Naive thymus-derived CD4-positive, alpha-beta T cell (primary cell): ENCODE measurements at regions of chr6 and their contacts with region 1.

Region 1: DNA sequence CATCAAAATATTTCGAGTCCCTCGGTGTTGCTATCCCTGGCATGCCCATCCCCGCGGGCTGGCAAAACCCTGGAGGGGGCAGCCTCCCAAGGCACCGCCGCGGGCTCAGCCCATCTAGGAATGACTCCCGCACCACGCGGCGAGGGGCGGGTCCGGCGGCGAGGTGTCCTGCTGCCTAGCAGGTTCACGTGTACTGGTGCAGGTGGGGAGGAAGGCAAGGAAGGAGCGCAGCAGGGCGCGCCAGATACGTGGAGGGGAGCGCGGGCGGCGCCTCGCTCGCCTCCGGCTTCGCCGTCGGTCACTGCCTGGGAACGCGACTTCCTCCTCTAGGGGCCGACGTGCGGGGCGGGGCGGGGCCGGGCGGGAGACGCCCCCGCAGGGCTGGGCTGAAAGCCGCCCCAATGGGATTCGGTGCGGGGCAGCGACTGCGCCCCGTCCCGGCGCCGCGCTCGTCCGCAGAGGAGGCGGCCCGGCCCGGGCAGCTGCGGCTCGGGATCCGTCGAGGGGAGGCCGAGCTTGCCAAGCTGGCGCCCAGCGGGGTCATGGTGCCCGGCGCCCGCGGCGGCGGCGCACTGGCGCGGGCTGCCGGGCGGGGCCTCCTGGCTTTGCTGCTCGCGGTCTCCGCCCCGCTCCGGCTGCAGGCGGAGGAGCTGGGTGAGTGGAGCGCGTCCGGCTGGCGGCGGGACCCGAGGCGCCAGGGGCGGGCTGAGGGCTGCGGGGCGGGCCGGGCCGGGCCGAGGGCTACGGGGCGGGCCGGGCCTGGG is at the start of gene DCBLD1:
- DNase-seq: peak in 8 of 9 donors; percentile 32 to 72 (median 36)
- ATAC-seq: peak; percentile 85
- H3K4me3 ChIP-seq: peak within 1 kb of the TSS; percentile 63
- H3K4me3 Mint-ChIP-seq: peak within 1 kb of the TSS; percentile 87 to 96 (median 91)
- H3K27ac ChIP-seq: no peak within 1 kb of the TSS
- H3K27ac Mint-ChIP-seq: peak within 1 kb of the TSS in 7 of 9 donors; percentile 28 to 84 (median 65)
- H3K4me1 ChIP-seq: peaks cover 8 to 10% of the 10 kb centered on the region in 2 donors
- H3K4me1 Mint-ChIP-seq: peaks cover 15 to 18% (median 16%) of the 10 kb centered on the region in 7 donors
- H3K27me3 ChIP-seq: no peaks in the 10 kb centered on the region
- H3K27me3 Mint-ChIP-seq: peaks cover 45 to 66% (median 53%) of the 10 kb centered on the region in 5 donors
- total RNA-seq, gene DCBLD1: 1.5 to 7.6 (median 5.6) TPM

Region 2: DNA sequence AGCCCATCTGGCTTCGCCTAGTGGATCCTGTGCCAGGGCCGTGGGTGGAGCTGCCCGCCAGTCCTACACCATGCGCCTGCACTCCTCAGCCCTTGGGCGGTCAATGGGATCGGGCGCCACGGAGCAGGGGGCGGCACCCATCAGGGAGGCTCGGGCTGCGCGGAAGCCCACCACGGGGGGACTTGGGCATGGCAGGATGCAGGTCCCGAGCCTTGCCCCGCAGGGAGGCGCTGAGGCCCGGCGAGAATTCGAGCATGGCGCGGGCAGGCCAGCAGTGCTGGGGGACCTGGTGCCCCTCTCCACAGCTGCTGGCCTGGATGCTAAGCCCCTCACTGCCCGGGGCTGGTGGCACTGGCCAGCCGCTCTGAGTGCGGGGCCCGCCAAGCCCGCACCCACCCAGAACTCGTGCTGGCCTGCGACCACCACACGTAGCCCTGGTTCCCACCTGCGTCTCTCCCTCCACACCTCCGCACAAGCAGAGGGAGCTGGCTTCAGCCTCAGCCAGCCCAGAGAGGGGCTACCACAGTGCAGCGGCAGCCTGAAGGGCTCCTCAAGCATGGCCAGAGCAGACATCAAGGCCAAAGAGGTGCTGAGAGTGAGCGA is 109.1 kb before region 1 on chr6:
- CTCF ChIA-PET with region 1: no interaction called
- POLR2A ChIA-PET with region 1: no interaction called
- intact Hi-C with region 1: no loop called
- DNase-seq: no peak
- ATAC-seq: no peak
- H3K4me3 ChIP-seq: no peak overlapping the region
- H3K4me3 Mint-ChIP-seq: no peak overlapping the region
- H3K27ac ChIP-seq: no peak overlapping the region
- H3K27ac Mint-ChIP-seq: no peak overlapping the region
- H3K4me1 ChIP-seq: no peaks in the 10 kb centered on the region
- H3K4me1 Mint-ChIP-seq: peaks cover 0 to 10% (median 4%) of the 10 kb centered on the region in 7 donors
- H3K27me3 ChIP-seq: peaks cover 0 to 4% of the 10 kb centered on the region in 2 donors
- H3K27me3 Mint-ChIP-seq: peaks cover 0 to 44% (median 25%) of the 10 kb centered on the region in 5 donors

Region 3: DNA sequence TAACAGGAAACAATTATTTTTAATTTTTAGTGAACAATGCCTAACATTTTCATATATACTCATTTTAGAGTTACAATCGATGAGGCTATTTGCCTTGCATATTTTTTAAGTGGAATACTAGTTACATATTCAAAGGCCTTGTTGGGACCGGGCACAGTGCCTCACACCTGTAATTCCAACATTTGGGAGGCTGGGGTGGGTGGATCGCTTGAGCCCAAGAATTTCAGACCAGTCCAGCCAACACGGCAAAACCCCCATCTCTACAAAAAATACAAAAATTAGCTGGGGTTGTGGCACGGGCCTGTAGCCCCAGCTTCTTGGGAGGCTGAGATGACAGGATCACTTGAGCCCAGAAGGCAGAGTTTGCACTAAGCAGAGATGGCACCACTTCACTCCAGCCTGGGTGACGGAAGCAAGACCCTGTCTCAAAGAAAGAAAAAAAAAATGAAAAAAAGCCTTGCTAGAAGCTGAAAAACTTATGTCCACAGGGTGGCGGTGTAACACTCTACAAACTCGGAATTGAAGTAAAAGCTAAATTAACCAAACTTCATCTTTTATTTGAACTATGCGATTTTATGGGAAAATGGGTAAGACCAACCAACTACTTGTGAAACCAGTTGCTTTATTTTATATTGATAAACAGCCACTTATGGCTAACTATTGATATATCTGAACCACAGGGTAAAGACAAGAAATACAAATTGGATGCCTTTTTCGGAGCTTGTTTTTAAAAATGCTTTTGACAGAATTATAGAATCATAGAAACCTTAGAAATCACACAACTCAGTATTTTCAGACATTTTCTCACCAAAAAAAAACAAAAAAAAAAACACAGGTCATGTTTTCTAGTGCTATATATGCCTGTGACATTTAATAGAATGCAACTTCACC is 32.6 kb before region 1 on chr6:
- CTCF ChIA-PET with region 1: interaction called, 4 read pairs
- POLR2A ChIA-PET with region 1: interaction called, 3 read pairs
- intact Hi-C with region 1: loop called in 1 of 2 experiments (anchors 1 kb)
- DNase-seq: peak; percentile 25 to 72 (median 60)
- ATAC-seq: peak; percentile 72
- H3K4me3 ChIP-seq: no peak overlapping the region
- H3K4me3 Mint-ChIP-seq: no peak overlapping the region
- H3K27ac ChIP-seq: no peak overlapping the region
- H3K27ac Mint-ChIP-seq: no peak overlapping the region
- H3K4me1 ChIP-seq: no peaks in the 10 kb centered on the region
- H3K4me1 Mint-ChIP-seq: peaks cover 0 to 5% (median 0%) of the 10 kb centered on the region in 7 donors
- H3K27me3 ChIP-seq: peaks cover 0 to 3% of the 10 kb centered on the region in 2 donors
- H3K27me3 Mint-ChIP-seq: peaks cover 19 to 73% (median 42%) of the 10 kb centered on the region in 5 donors

Region 4: GRCh38 chr6:117536317-117536716 is 53.9 kb after region 1 on chr6:
- CTCF ChIA-PET with region 1: no interaction called
- POLR2A ChIA-PET with region 1: no interaction called
- intact Hi-C with region 1: no loop called
- DNase-seq: no peak
- ATAC-seq: no peak
- H3K4me3 ChIP-seq: no peak overlapping the region
- H3K4me3 Mint-ChIP-seq: no peak overlapping the region
- H3K27ac ChIP-seq: no peak overlapping the region
- H3K27ac Mint-ChIP-seq: no peak overlapping the region
- H3K4me1 ChIP-seq: no peaks in the 10 kb centered on the region
- H3K4me1 Mint-ChIP-seq: peaks cover 0 to 3% (median 0%) of the 10 kb centered on the region in 7 donors
- H3K27me3 ChIP-seq: no peaks in the 10 kb centered on the region
- H3K27me3 Mint-ChIP-seq: peaks cover 9 to 28% (median 13%) of the 10 kb centered on the region in 5 donors

Region 5: DNA sequence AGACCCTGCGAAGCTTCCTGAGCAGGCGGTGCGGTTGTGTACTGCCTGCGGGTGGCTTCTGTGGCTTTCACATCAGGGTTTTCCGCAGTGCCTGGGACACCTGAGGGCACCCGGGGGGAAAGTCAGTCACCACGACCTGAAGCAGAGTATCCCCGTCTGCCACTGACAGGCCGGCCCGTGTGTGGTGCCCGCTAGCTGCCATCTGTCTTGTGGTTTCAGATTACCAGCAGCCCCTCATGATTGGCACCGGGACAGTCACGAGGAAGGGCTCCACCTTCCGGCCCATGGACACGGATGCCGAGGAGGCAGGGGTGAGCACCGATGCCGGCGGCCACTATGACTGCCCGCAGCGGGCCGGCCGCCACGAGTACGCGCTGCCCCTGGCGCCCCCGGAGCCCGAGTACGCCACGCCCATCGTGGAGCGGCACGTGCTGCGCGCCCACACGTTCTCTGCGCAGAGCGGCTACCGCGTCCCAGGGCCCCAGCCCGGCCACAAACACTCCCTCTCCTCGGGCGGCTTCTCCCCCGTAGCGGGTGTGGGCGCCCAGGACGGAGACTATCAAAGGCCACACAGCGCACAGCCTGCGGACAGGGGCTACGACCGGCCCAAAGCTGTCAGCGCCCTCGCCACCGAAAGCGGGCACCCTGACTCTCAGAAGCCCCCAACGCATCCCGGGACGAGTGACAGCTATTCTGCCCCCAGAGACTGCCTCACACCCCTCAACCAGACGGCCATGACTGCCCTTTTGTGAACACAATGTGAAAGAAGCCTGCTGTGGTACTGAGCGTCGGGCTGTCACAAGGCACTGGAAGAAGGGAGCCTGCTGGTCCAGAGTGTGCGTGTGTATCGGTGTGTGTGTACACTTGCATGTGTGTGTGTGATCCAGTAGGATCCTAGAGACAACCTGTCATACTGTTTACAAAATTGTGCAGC is 65.5 kb after region 1 on chr6:
- CTCF ChIA-PET with region 1: interaction called, 18 read pairs
- POLR2A ChIA-PET with region 1: interaction called, 9 read pairs
- intact Hi-C with region 1: loop called (anchors 1 kb)
- DNase-seq: peak; percentile 20 to 57 (median 37)
- ATAC-seq: peak; percentile 60
- H3K4me3 ChIP-seq: peak overlapping the region; percentile 75
- H3K4me3 Mint-ChIP-seq: peak overlapping the region; percentile 81 to 90 (median 86)
- H3K27ac ChIP-seq: peak overlapping the region; percentile 45
- H3K27ac Mint-ChIP-seq: peak overlapping the region; percentile 79 to 95 (median 87)
- H3K4me1 ChIP-seq: peaks cover 18 to 37% of the 10 kb centered on the region in 2 donors
- H3K4me1 Mint-ChIP-seq: peaks cover 28 to 44% (median 41%) of the 10 kb centered on the region in 7 donors
- H3K27me3 ChIP-seq: no peaks in the 10 kb centered on the region
- H3K27me3 Mint-ChIP-seq: peaks cover 0 to 9% (median 0%) of the 10 kb centered on the region in 5 donors

Region 6: GRCh38 chr6:117555882-117556498 is 73.6 kb after region 1 on chr6:
- CTCF ChIA-PET with region 1: interaction called, 18 read pairs
- POLR2A ChIA-PET with region 1: no interaction called
- intact Hi-C with region 1: loop called (anchors 1 kb)
- DNase-seq: peak; percentile 20 to 62 (median 46)
- ATAC-seq: peak; percentile 60
- H3K4me3 ChIP-seq: no peak overlapping the region
- H3K4me3 Mint-ChIP-seq: no peak overlapping the region
- H3K27ac ChIP-seq: no peak overlapping the region
- H3K27ac Mint-ChIP-seq: no peak overlapping the region
- H3K4me1 ChIP-seq: peaks cover 0 to under 1% of the 10 kb centered on the region in 2 donors
- H3K4me1 Mint-ChIP-seq: peaks cover under 1 to 3% (median 2%) of the 10 kb centered on the region in 7 donors
- H3K27me3 ChIP-seq: no peaks in the 10 kb centered on the region
- H3K27me3 Mint-ChIP-seq: peaks cover 0 to 2% (median 0%) of the 10 kb centered on the region in 5 donors

Region 7: DNA sequence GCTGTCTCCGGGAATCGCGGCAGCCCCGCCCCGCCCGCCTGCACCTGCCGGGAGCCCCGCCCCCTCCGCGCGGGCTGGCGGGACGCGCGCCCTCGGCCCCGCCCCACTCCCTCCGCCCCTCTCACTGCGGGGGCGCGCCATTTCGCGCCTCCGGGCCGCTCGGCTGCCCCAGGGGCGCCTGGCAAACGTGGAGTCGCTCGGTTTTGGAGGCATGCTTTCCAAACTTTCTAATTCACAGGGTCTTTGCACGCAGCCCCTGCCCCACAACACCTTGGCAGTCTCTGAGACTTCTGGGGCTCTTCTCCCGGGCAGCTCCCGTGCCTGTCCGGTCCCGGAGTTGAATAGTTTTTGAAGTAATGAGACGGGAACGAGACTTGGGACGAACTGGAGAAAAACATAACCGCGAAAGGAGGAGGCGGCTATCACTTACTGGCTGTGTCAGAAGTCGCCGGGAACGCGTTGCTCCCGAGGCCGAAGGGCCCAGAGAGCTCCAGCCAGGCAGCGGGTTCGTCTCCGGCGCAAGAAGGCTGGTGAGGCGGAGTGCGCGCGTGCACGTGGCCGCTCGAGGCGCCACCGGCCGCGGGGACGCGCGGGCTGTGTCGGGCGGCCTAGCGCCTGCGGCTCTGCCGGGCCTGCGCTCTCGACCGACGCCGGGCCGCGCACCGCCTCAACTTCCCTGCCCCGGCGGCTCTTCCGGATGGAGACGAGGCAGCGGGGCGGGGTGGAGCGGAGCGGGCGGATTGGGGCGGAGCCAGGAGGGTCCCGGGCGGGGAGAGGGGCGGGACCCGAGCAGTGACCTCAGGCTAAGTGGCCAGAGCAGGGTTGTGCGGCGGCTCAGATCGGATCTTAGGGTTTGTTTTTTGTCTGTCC is 1452.3 kb after region 1 on chr6 and contains the start of gene MCM9:
- CTCF ChIA-PET with region 1: no interaction called
- POLR2A ChIA-PET with region 1: no interaction called
- intact Hi-C with region 1: loop called in 1 of 2 experiments (anchors 10 kb)
- DNase-seq: peak; percentile 77 to 93 (median 86)
- ATAC-seq: peak; percentile 92
- H3K4me3 ChIP-seq: peak within 1 kb of the TSS; percentile 98
- H3K4me3 Mint-ChIP-seq: peak within 1 kb of the TSS; percentile 86 to 96 (median 91)
- H3K27ac ChIP-seq: peak within 1 kb of the TSS; percentile 95
- H3K27ac Mint-ChIP-seq: peak within 1 kb of the TSS; percentile 86 to 95 (median 93)
- H3K4me1 ChIP-seq: peaks cover 4 to 8% of the 10 kb centered on the region in 2 donors
- H3K4me1 Mint-ChIP-seq: peaks cover 22 to 47% (median 41%) of the 10 kb centered on the region in 7 donors
- H3K27me3 ChIP-seq: no peaks in the 10 kb centered on the region
- H3K27me3 Mint-ChIP-seq: no peaks in the 10 kb centered on the region
- total RNA-seq, gene MCM9: 21.8 to 33.7 (median 31.1) TPM